ENCODE measurements at regions of chr9 and their contacts with region 1.

Region 1: GRCh38 chr9:131762356-131762932 is 22.6 kb upstream of the RAPGEF1 start:
- DNase-seq: peak; percentile 77 to 88
- ATAC-seq: peak; percentile 89 to 99 (median 99)
- H3K4me3 ChIP-seq: no peak overlapping the region
- H3K4me3 Mint-ChIP-seq: no peak overlapping the region
- H3K27ac ChIP-seq: no peak overlapping the region
- H3K27ac Mint-ChIP-seq: no peak overlapping the region
- H3K4me1 ChIP-seq: peaks cover 7% of the 10 kb centered on the region
- H3K4me1 Mint-ChIP-seq: peaks cover 0 to 6% of the 10 kb centered on the region in 2 donors
- H3K27me3 ChIP-seq: no peaks in the 10 kb centered on the region
- H3K27me3 Mint-ChIP-seq: peaks cover 14 to 26% of the 10 kb centered on the region in 2 donors
- CTCF ChIP-seq: peak; percentile 98

Region 2: DNA sequence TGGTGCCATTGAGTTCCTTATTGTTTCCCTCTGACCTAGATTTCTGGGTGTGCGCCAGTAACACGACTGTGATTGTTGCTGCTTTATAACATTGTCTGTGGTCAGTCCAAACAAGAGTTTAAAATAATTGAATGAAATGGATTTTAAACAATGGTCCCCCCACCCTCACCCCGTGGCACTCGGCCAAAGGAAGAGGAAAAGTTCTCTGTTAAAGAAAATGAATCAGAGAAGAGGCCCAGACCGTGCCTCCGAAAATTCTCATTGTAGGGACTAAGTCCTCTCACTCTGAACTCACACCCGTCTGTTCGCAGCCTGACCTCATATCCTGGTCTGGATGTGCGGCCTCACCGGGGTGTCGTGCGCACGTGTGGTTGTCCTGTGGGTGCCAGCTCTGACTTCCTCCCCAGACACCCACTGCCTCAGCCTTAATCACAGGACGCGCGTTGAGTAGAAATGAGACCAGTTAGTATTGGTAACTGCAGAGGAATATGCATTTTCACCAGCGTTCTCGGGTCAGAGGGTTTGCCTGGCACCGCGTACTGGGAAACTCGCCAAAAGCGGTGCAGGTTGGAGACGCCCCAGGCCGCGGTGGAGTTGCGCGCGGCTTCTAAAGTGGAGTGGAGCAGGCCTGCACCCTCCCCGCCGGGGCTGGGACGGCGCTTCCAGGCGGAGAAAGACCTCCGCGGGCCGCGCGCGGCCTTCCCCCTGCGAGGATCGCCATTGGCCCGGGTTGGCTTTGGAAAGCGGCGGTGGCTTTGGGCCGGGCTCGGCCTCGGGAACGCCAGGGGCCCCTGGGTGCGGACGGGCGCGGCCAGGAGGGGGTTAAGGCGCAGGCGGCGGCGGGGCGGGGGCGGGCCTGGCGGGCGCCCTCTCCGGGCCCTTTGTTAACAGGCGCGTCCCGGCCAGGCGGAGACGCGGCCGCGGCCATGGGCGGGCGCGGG is 927.8 kb before region 1 on chr9 and contains the start of gene ABL1:
- intact Hi-C with region 1: no loop called
- DNase-seq: peak; percentile 78 to 83
- ATAC-seq: peak; percentile 83 to 92 (median 91)
- H3K4me3 ChIP-seq: peak within 1 kb of the TSS; percentile 64
- H3K4me3 Mint-ChIP-seq: peak within 1 kb of the TSS; percentile 96
- H3K27ac ChIP-seq: peak within 1 kb of the TSS; percentile 81
- H3K27ac Mint-ChIP-seq: peak within 1 kb of the TSS; percentile 84 to 92
- H3K4me1 ChIP-seq: peaks cover 20% of the 10 kb centered on the region
- H3K4me1 Mint-ChIP-seq: peaks cover 41 to 59% of the 10 kb centered on the region in 2 donors
- H3K27me3 ChIP-seq: no peaks in the 10 kb centered on the region
- H3K27me3 Mint-ChIP-seq: no peaks in the 10 kb centered on the region
- CTCF ChIP-seq: no peak
- total RNA-seq, gene ABL1: 49.7 to 65.6 (median 53.8) TPM

Region 3: DNA sequence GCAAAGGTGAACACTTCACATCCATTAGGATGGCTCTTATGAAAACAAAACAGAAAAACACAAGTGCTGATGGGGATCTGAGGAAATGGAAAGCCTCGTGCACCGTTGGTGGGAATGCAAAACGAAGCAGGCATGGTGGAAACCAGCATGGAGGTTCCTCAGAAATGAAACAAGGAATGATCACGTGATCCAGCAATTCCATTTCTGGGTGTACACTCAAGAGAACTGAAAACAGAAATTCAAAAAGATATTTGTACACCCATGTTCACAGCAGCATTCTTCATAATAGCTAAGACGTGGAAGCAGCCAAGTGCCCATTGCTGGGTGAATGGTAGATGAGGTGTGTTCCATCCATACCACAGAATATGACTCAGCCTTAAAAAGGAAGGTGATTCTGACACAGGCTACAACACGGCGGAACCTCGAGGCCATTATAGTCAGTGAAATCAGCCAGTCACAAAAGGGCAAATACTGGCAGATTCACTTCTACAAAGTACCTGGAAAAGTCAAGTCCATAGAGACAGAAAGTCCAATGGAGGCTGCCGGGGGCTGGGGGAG is 64.6 kb after region 1 on chr9:
- intact Hi-C with region 1: no loop called
- DNase-seq: no peak
- ATAC-seq: no peak
- H3K4me3 ChIP-seq: no peak overlapping the region
- H3K4me3 Mint-ChIP-seq: no peak overlapping the region
- H3K27ac ChIP-seq: no peak overlapping the region
- H3K27ac Mint-ChIP-seq: no peak overlapping the region
- H3K4me1 ChIP-seq: no peaks in the 10 kb centered on the region
- H3K4me1 Mint-ChIP-seq: no peaks in the 10 kb centered on the region
- H3K27me3 ChIP-seq: no peaks in the 10 kb centered on the region
- H3K27me3 Mint-ChIP-seq: peaks cover 10 to 23% of the 10 kb centered on the region in 2 donors
- CTCF ChIP-seq: no peak

Region 4: DNA sequence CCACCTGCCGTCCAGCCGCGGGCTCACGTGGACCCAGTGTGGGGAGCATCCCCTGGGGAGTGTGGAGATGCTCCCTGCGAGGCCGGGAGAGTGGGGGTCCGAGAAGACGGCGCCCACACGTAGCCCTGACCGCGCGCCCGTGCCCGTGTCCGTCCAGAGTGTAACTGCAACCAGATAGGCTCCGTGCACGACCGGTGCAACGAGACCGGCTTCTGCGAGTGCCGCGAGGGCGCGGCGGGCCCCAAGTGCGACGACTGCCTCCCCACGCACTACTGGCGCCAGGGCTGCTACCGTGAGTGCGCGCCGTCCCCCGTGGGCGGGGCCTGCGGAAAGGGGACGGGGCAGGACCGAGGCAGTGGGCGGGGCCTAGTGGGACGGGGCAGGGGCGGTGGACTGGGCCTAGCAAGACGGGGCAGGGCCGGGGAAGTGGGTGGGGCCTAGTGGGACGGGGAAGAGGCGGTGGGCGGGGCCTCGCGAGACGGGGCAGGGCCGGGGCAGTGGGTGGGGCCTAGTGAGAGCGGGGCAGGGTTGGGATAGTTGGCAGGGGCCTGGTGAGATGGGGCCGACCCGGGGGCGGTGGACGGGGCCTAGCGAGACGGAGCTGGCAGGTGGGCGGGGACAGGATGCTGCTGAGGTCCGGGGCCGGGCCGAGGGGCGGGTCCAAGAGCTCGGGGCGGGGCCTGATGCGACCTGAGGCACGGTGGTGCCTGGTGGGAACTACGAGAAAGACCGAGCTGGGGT is 478.5 kb after region 1 on chr9:
- intact Hi-C with region 1: loop called (anchors 1 kb)
- DNase-seq: peak; percentile 97 to 99
- ATAC-seq: peak; percentile 83 to 95 (median 88)
- H3K4me3 ChIP-seq: peak overlapping the region; percentile 57
- H3K4me3 Mint-ChIP-seq: peak overlapping the region; percentile 91
- H3K27ac ChIP-seq: peak overlapping the region; percentile 16
- H3K27ac Mint-ChIP-seq: peak overlapping the region in 1 of 2 donors; percentile 92
- H3K4me1 ChIP-seq: peaks cover 32% of the 10 kb centered on the region
- H3K4me1 Mint-ChIP-seq: peaks cover 10 to 15% of the 10 kb centered on the region in 2 donors
- H3K27me3 ChIP-seq: peaks cover 6% of the 10 kb centered on the region
- H3K27me3 Mint-ChIP-seq: peaks cover 0 to 4% of the 10 kb centered on the region in 2 donors
- CTCF ChIP-seq: no peak

Region 5: GRCh38 chr9:132249123-132249522 is 486.7 kb after region 1 on chr9:
- intact Hi-C with region 1: loop called (anchors 1 kb)
- DNase-seq: no peak
- ATAC-seq: no peak
- H3K4me3 ChIP-seq: no peak overlapping the region
- H3K4me3 Mint-ChIP-seq: no peak overlapping the region
- H3K27ac ChIP-seq: no peak overlapping the region
- H3K27ac Mint-ChIP-seq: no peak overlapping the region
- H3K4me1 ChIP-seq: no peaks in the 10 kb centered on the region
- H3K4me1 Mint-ChIP-seq: no peaks in the 10 kb centered on the region
- H3K27me3 ChIP-seq: peaks cover 6% of the 10 kb centered on the region
- H3K27me3 Mint-ChIP-seq: peaks cover 0 to 13% of the 10 kb centered on the region in 2 donors
- CTCF ChIP-seq: no peak

Region 6: DNA sequence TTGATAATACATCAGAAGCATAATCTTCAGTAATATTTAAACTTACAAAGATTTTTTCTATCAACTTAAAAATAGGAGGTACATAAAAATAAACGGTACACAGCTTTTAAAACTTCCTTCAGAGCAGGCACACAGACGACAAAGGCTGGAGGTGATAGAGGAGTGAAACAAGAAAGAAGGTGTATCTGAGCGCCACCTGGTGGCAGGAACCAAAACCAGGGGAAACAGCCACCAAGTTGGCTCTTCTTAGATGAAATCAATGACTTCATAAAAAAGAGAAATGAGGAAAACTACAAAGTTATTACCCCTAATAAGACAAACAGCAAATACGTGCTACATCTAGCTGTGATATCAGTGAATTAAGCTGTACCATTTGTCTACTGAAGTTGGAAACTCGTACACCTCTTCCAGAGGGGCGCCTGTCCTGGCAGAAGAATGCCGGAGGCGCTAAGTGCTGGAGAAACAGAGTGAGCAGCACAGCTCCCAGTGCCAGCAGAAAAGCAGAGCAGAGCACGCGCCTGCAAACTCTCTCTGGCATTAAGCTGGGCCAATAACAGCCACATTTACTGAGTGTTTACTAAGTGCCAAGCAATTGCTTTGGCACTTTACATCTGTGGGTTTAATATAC is 506.4 kb after region 1 on chr9:
- intact Hi-C with region 1: loop called (anchors 1 kb)
- DNase-seq: peak; percentile 65 to 86
- ATAC-seq: peak; percentile 70 to 82 (median 75)
- H3K4me3 ChIP-seq: no peak overlapping the region
- H3K4me3 Mint-ChIP-seq: no peak overlapping the region
- H3K27ac ChIP-seq: no peak overlapping the region
- H3K27ac Mint-ChIP-seq: peak overlapping the region; percentile 43 to 62
- H3K4me1 ChIP-seq: no peaks in the 10 kb centered on the region
- H3K4me1 Mint-ChIP-seq: peaks cover 0 to 5% of the 10 kb centered on the region in 2 donors
- H3K27me3 ChIP-seq: no peaks in the 10 kb centered on the region
- H3K27me3 Mint-ChIP-seq: no peaks in the 10 kb centered on the region
- CTCF ChIP-seq: peak; percentile 99

Measured in natural killer cell (primary cell).